MCF 10A (cell line): ENCODE measurements at regions of chr11 and their contacts with region 1.

Region 1: GRCh38 chr11:59171508-59172322 is at the start of gene DTX4:
- DNase-seq: peak; percentile 91
- H3K4me3 Mint-ChIP-seq: no peak within 1 kb of the TSS
- H3K27ac Mint-ChIP-seq: peak within 1 kb of the TSS; percentile 88
- H3K4me1 Mint-ChIP-seq: peaks cover 28% of the 10 kb centered on the region
- H3K27me3 Mint-ChIP-seq: no peaks in the 10 kb centered on the region
- CTCF ChIP-seq: peak; percentile 65
- total RNA-seq, gene DTX4: 3.4 and 4.2 TPM in 2 replicates

Region 2: DNA sequence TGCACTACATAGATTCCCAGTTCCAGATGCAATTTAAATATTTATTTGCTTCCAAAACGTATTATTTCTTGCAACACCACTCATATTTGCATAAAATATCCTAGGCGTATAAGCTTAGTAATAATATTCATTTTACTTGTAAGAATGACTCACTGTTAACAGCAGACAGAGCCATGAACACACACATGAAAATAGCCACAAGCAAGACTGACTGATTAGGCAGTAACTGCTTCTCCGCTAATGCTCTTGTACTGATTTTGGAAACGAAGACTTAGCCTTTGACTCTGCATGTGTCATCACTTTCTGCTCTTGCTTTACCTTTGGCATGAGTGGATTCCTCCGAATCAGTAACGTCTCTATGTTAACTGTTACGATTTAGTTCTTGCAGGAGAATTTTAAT is 949.0 kb before region 1 on chr11:
- CTCF ChIA-PET with region 1: no interaction called
- POLR2A ChIA-PET with region 1: no interaction called
- intact Hi-C with region 1: no loop called
- DNase-seq: peak; percentile 64
- H3K4me3 Mint-ChIP-seq: no peak overlapping the region
- H3K27ac Mint-ChIP-seq: peak overlapping the region; percentile 58
- H3K4me1 Mint-ChIP-seq: peaks cover 12% of the 10 kb centered on the region
- H3K27me3 Mint-ChIP-seq: no peaks in the 10 kb centered on the region
- CTCF ChIP-seq: no peak

Region 3: GRCh38 chr11:58813693-58814092 is 358.0 kb before region 1 on chr11:
- CTCF ChIA-PET with region 1: no interaction called
- POLR2A ChIA-PET with region 1: no interaction called
- intact Hi-C with region 1: no loop called
- DNase-seq: no peak
- H3K4me3 Mint-ChIP-seq: no peak overlapping the region
- H3K27ac Mint-ChIP-seq: no peak overlapping the region
- H3K4me1 Mint-ChIP-seq: no peaks in the 10 kb centered on the region
- H3K27me3 Mint-ChIP-seq: no peaks in the 10 kb centered on the region
- CTCF ChIP-seq: no peak

Region 4: GRCh38 chr11:58919980-58920379 is 251.7 kb before region 1 on chr11:
- CTCF ChIA-PET with region 1: no interaction called
- POLR2A ChIA-PET with region 1: no interaction called
- intact Hi-C with region 1: no loop called
- DNase-seq: no peak
- H3K4me3 Mint-ChIP-seq: no peak overlapping the region
- H3K27ac Mint-ChIP-seq: no peak overlapping the region
- H3K4me1 Mint-ChIP-seq: peaks cover 14% of the 10 kb centered on the region
- H3K27me3 Mint-ChIP-seq: no peaks in the 10 kb centered on the region
- CTCF ChIP-seq: no peak

Region 5: GRCh38 chr11:59158206-59159068 is 13.3 kb before region 1 on chr11:
- CTCF ChIA-PET with region 1: interaction called, 24 read pairs
- POLR2A ChIA-PET with region 1: interaction called, 9 read pairs
- intact Hi-C with region 1: no loop called
- DNase-seq: peak; percentile 78
- H3K4me3 Mint-ChIP-seq: no peak overlapping the region
- H3K27ac Mint-ChIP-seq: no peak overlapping the region
- H3K4me1 Mint-ChIP-seq: no peaks in the 10 kb centered on the region
- H3K27me3 Mint-ChIP-seq: peaks cover 17% of the 10 kb centered on the region
- CTCF ChIP-seq: peak; percentile 76

Region 6: DNA sequence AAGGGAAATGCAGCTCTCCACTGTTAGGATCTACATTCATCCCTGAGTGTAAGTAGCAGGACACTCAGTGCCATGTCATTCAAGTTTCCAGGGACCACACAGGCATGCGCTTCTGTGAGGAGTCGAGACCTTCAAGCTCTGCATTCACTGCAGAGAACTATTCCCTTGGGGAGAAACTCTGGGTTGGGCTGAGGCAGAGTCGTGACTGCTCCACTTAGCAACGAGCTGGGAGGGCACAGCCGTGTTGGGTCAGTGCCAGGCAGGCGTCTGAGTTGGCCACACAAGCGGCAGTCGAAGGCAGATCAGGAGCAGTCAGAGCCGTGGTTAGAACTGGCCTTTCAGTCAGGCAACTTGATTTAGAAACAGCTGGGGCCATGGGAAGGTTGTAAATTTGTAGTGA is 26.3 kb after region 1 on chr11:
- CTCF ChIA-PET with region 1: interaction called, 530 read pairs
- POLR2A ChIA-PET with region 1: interaction called, 10 read pairs
- intact Hi-C with region 1: no loop called
- DNase-seq: no peak
- H3K4me3 Mint-ChIP-seq: no peak overlapping the region
- H3K27ac Mint-ChIP-seq: peak overlapping the region; percentile 17
- H3K4me1 Mint-ChIP-seq: peaks cover 14% of the 10 kb centered on the region
- H3K27me3 Mint-ChIP-seq: no peaks in the 10 kb centered on the region
- CTCF ChIP-seq: no peak

Region 7: GRCh38 chr11:59216641-59217564 is 45.2 kb after region 1 on chr11:
- CTCF ChIA-PET with region 1: interaction called, 530 read pairs
- POLR2A ChIA-PET with region 1: no interaction called
- intact Hi-C with region 1: no loop called
- DNase-seq: peak; percentile 88
- H3K4me3 Mint-ChIP-seq: no peak overlapping the region
- H3K27ac Mint-ChIP-seq: no peak overlapping the region
- H3K4me1 Mint-ChIP-seq: peaks cover 22% of the 10 kb centered on the region
- H3K27me3 Mint-ChIP-seq: peaks cover 28% of the 10 kb centered on the region
- CTCF ChIP-seq: no peak

Region 8: DNA sequence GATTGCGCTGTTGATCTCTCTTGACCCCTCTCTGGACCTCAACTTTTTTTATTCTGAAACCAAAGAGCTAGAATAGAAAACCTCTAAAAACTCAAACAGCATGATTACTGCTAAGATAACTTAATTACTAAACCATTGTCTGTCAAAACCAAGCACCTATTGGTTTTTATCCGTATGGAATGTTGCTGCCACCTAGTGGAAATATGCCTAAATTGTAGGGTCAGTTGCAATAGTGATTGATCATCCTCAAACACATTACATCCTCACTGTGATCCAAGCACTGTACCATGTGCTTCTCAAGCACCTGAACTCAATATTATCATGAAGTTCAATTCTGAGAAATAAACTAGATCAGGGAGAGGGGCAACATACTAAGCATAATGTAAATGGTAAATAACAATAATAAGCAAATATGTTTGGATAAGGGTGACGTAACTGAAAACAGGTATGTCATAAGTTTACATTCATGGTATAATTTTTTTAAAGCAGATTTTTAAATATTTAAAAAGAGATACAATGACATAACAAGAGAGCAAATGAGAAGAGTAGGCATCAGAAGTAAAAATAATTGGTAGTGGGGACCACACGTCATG is 258.3 kb after region 1 on chr11:
- CTCF ChIA-PET with region 1: interaction called, 32 read pairs
- POLR2A ChIA-PET with region 1: interaction called, 3 read pairs
- intact Hi-C with region 1: loop called (anchors 1 kb)
- DNase-seq: peak; percentile 73
- H3K4me3 Mint-ChIP-seq: no peak overlapping the region
- H3K27ac Mint-ChIP-seq: no peak overlapping the region
- H3K4me1 Mint-ChIP-seq: no peaks in the 10 kb centered on the region
- H3K27me3 Mint-ChIP-seq: peaks cover 50% of the 10 kb centered on the region
- CTCF ChIP-seq: peak; percentile 73